Endothelial cell of umbilical vein (primary cell): ENCODE measurements at regions of chr10 and their contacts with region 1.

Region 1: DNA sequence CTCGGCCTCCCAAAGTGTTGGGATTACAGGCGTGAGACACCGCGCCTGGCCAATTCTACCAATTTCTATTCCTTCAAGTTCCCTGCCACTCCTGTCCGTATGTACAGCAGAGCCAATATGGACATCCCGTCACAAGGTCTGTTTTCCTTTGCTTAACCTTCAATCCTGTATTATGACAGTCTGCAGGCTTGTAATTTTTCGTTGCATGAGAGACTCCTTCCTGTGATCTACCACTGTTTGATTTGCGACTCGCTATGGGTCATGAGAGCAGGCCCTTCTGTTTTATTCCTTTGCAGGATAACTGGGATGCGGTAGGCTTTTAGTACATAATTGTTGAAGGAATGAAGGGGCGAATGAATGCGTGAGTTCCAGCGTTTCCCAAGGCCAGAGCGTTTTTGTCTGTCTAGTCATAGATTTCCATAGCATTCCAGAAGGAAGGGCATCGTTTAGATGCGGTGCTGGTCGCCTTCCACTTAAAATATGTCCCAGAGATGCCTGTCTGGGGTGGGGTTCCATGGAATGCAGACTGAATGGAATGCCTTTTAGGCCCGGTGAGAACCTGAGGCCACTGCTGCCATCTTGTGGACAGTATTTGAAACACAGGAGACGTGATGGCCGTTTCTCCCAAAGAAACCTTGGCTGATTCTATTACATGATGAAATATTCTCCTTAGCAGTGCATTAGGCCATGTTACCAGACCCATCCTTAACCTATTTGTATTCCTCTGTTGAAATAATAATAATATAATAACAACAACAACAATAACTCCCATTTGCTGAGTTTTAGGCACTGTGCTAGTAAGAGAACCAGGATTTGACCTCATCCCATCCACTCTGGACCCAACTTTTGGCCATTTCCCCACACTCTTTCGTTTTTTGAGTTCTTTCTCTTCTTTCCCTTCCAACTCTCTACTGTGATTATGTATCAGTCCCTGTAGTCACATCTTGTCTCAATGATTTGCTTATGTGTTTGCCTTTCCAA is 193.2 kb downstream of the MYOF start:
- DNase-seq: peak; percentile 71
- H3K4me3 ChIP-seq: no peak overlapping the region
- H3K27ac ChIP-seq: peak overlapping the region; percentile 8
- H3K4me1 ChIP-seq: peaks cover 2% of the 10 kb centered on the region
- H3K27me3 ChIP-seq: no peaks in the 10 kb centered on the region
- CTCF ChIP-seq: peak; percentile 77 to 83
- POLR2A ChIP-seq: no peak

Region 2: GRCh38 chr10:92886334-92886961 is 402.5 kb before region 1 on chr10:
- CTCF ChIA-PET with region 1: no interaction called
- POLR2A ChIA-PET with region 1: no interaction called
- dilution Hi-C with region 1: no loop called
- intact Hi-C with region 1: loop called (anchors 1 kb)
- DNase-seq: no peak
- H3K4me3 ChIP-seq: no peak overlapping the region
- H3K27ac ChIP-seq: no peak overlapping the region
- H3K4me1 ChIP-seq: peaks cover 18% of the 10 kb centered on the region
- H3K27me3 ChIP-seq: no peaks in the 10 kb centered on the region
- CTCF ChIP-seq: no peak
- POLR2A ChIP-seq: no peak

Region 3: DNA sequence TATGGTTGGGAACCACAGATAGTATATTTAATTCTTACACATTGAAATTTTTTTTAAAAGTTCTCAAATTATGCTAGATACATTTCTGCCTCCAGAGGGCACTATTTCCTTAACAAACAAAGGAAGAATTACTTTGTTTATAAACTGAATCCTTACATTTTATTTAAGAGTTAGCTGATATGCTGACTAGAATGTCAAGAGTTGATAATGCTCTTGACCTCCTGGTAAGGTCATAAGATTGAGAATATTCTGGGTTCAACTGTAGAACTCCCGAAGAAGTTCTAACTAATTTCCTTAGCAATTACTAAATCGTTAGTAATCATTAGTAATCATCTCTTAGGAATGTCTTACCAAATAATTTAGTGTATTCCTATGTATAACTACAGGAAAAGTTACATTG is 323.6 kb before region 1 on chr10:
- CTCF ChIA-PET with region 1: interaction called, 6 read pairs
- POLR2A ChIA-PET with region 1: no interaction called
- dilution Hi-C with region 1: no loop called
- intact Hi-C with region 1: loop called (anchors 2 kb)
- DNase-seq: peak; percentile 70
- H3K4me3 ChIP-seq: no peak overlapping the region
- H3K27ac ChIP-seq: peak overlapping the region; percentile 10
- H3K4me1 ChIP-seq: peaks cover 14% of the 10 kb centered on the region
- H3K27me3 ChIP-seq: no peaks in the 10 kb centered on the region
- CTCF ChIP-seq: peak; percentile 15 to 40
- POLR2A ChIP-seq: no peak

Region 4: DNA sequence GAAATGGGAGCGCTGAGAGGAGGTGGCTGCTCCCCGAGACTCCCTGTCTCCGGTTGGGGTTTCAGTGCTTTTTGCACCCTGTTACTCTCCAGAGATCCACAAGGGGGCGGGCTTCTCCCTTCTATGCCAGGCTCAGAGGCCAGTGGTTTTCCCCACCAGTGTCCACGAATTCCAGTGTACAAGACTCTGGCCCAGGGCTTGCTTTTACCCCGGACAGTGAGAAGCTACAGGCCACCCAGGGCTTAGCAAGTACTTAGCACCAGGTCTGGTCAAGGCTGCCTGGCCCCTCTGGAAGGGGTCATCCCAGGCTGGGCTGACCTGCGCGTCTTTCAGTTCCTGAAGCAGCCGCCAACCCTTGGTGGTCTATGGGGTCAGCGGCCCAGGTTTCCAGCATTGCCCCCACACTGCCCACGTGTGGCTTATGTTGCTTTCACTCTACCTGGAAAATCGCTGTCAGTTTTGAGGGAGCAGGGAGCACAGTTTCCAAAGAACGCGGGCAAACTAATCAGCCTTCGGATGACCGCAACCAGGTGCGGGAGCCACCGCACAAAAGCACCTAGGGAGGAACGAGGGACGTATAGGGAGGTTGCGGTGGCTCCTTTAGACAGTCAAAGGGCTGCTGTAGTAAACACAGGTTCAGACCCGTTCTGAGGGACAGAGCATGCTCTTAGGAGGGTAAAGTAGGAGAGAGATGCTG is 208.4 kb before region 1 on chr10:
- CTCF ChIA-PET with region 1: interaction called, 24 read pairs
- POLR2A ChIA-PET with region 1: no interaction called
- dilution Hi-C with region 1: no loop called
- intact Hi-C with region 1: loop called (anchors 1 kb)
- DNase-seq: no peak
- H3K4me3 ChIP-seq: no peak overlapping the region
- H3K27ac ChIP-seq: no peak overlapping the region
- H3K4me1 ChIP-seq: no peaks in the 10 kb centered on the region
- H3K27me3 ChIP-seq: peaks cover 8 to 11% of the 10 kb centered on the region in 2 experiments
- CTCF ChIP-seq: peak; percentile 75 to 85
- POLR2A ChIP-seq: no peak

Region 5: DNA sequence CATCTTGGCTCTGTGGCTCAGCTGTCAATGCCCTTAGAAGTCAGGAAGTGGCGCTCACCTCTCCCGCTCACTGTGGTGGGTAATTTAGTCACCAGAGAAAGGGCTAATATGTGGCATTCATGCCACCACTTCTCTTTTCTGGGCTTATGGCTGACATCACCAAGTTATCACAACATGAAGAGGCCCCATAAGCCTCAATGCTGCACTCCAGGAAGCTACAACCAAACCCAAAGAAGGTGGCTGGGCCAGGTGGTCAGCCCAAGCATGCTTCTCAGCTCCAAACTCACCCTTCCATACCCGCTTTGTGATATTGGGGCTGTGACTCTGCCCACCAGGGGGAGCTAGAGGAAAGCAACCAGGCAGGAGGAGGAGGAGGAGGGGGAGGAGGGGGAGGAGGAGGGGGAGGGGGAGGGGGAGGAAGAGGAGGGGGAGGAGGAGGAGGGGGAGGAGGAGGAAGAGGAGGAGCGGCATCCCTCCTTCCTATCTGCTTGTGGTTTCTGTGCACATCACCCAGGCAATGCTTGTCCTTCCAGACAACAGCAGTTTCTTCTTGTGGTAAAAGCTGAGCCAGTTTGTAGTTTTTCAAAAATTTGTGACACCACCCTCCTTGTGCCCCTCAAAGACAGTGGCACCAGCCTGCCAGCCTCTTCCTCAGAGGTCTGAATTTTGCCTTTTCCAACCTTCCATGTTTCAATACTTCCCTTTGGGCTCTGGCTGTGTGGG is 173.1 kb before region 1 on chr10:
- CTCF ChIA-PET with region 1: interaction called, 44 read pairs
- POLR2A ChIA-PET with region 1: no interaction called
- dilution Hi-C with region 1: loop called (anchors 25 kb)
- intact Hi-C with region 1: loop called (anchors 1 kb)
- DNase-seq: peak; percentile 38
- H3K4me3 ChIP-seq: no peak overlapping the region
- H3K27ac ChIP-seq: no peak overlapping the region
- H3K4me1 ChIP-seq: no peaks in the 10 kb centered on the region
- H3K27me3 ChIP-seq: peaks cover 8 to 13% of the 10 kb centered on the region in 2 experiments
- CTCF ChIP-seq: peak; percentile 21 to 60
- POLR2A ChIP-seq: no peak